ENCODE measurements at regions of chr2 and their contacts with region 1.

Region 1: GRCh38 chr2:207166039-207166348 is 246 bp upstream of the KLF7 start:
- DNase-seq: peak; percentile 93 to 96
- H3K4me3 ChIP-seq: peak overlapping the region; percentile 87
- H3K27ac ChIP-seq: peak overlapping the region; percentile 93
- H3K4me1 ChIP-seq: peaks cover 29% of the 10 kb centered on the region
- H3K27me3 ChIP-seq: no peaks in the 10 kb centered on the region
- CTCF ChIP-seq: no peak

Region 2: GRCh38 chr2:207035875-207036274 is 130.1 kb before region 1 on chr2:
- CTCF ChIA-PET with region 1: no interaction called
- POLR2A ChIA-PET with region 1: no interaction called
- intact Hi-C with region 1: no loop called
- DNase-seq: no peak
- H3K4me3 ChIP-seq: no peak overlapping the region
- H3K27ac ChIP-seq: no peak overlapping the region
- H3K4me1 ChIP-seq: no peaks in the 10 kb centered on the region
- H3K27me3 ChIP-seq: no peaks in the 10 kb centered on the region
- CTCF ChIP-seq: no peak

Region 3: GRCh38 chr2:207121784-207122183 is 44.2 kb before region 1 on chr2:
- CTCF ChIA-PET with region 1: interaction called, 3 read pairs
- POLR2A ChIA-PET with region 1: no interaction called
- intact Hi-C with region 1: loop called (anchors 5 kb)
- DNase-seq: peak; percentile 20 to 36
- H3K4me3 ChIP-seq: no peak overlapping the region
- H3K27ac ChIP-seq: peak overlapping the region; percentile 54
- H3K4me1 ChIP-seq: peaks cover 30% of the 10 kb centered on the region
- H3K27me3 ChIP-seq: no peaks in the 10 kb centered on the region
- CTCF ChIP-seq: no peak

Region 4: DNA sequence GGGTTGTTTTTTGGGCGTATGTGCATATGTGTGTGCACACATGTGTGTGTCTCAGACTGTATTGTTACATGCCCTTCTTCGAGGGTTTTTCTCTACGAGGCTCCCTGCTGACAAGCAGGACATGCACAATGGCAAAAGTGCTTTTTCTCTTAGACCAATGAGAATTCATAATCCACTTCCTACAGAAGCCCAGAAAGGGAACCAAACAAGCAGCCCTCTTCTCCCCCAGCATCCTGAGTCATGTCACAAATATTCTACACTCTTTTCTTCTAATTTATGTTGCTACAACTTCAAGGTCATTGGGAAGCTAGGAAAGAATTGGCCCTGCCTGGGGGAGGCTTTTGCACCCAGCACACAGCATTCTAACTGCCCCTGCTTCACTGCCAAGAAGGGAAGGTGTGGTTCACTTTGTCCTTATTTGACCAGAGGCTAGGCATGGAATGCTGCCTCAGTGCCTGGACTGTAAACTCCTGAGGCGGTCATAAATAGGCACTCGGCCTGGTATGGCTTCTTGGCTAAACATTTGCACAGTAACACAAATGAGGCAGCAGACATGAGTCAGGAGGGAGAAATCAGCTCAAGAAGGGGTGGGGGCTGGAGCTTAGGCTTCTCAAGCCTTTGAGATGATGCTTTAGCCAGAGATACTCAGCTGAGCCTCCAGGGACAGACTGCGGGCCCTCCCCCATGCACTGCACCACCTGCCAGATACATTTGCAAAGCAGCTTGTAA is 92.4 kb after region 1 on chr2:
- CTCF ChIA-PET with region 1: interaction called, 3 read pairs
- POLR2A ChIA-PET with region 1: interaction called, 13 read pairs
- intact Hi-C with region 1: loop called (anchors 1 kb)
- DNase-seq: peak; percentile 75 to 81
- H3K4me3 ChIP-seq: no peak overlapping the region
- H3K27ac ChIP-seq: no peak overlapping the region
- H3K4me1 ChIP-seq: peaks cover 39% of the 10 kb centered on the region
- H3K27me3 ChIP-seq: no peaks in the 10 kb centered on the region
- CTCF ChIP-seq: no peak

Region 5: DNA sequence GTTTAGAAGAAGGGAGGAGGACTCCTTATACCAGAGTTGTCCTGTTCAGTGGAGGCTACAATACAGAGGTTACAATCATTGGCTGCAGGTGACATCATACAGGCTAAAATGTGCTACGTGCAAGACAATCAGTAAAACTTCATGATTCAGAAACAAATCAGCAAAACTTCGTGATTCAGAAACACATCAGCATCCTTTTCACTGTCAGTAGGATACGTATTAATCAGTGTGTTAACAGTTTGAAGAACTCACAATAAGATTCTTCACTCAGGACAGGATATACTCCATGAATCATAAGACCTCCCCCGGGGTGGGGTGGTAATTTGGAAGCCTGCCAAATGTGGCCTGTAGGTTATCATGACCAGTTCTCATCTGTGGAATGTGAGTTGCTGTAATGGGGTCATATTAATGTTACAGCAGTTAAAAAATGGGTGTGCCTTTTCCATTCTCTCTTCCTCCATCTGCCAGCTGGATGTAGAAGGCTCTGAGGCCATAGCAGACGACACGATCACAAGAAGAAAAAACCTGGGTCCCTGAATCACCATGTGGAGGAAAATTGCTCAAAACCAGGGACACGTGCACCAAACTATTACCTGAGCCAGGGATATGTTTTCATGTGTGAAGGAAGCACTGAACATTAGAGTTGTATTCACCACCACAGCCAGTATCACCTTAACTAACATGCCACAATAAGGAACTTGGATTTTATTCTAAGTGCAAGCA is 229.0 kb after region 1 on chr2:
- CTCF ChIA-PET with region 1: no interaction called
- POLR2A ChIA-PET with region 1: no interaction called
- intact Hi-C with region 1: loop called (anchors 1 kb)
- DNase-seq: peak; percentile 79 to 96
- H3K4me3 ChIP-seq: peak overlapping the region; percentile 40; the same call in 1 of the 2 replicates
- H3K27ac ChIP-seq: peak overlapping the region; percentile 99
- H3K4me1 ChIP-seq: peaks cover 37% of the 10 kb centered on the region
- H3K27me3 ChIP-seq: no peaks in the 10 kb centered on the region
- CTCF ChIP-seq: no peak

Region 6: GRCh38 chr2:207473049-207473930 is 307.3 kb after region 1 on chr2:
- CTCF ChIA-PET with region 1: no interaction called
- POLR2A ChIA-PET with region 1: interaction called, 3 read pairs
- intact Hi-C with region 1: loop called (anchors 1 kb)
- DNase-seq: peak; percentile 40 to 46
- H3K4me3 ChIP-seq: no peak overlapping the region
- H3K27ac ChIP-seq: no peak overlapping the region
- H3K4me1 ChIP-seq: peaks cover 18% of the 10 kb centered on the region
- H3K27me3 ChIP-seq: no peaks in the 10 kb centered on the region
- CTCF ChIP-seq: peak; percentile 64